Posterior cingulate gyrus (tissue), 11 donors: ENCODE measurements at regions of chr1 and their contacts with region 1.

Region 1: DNA sequence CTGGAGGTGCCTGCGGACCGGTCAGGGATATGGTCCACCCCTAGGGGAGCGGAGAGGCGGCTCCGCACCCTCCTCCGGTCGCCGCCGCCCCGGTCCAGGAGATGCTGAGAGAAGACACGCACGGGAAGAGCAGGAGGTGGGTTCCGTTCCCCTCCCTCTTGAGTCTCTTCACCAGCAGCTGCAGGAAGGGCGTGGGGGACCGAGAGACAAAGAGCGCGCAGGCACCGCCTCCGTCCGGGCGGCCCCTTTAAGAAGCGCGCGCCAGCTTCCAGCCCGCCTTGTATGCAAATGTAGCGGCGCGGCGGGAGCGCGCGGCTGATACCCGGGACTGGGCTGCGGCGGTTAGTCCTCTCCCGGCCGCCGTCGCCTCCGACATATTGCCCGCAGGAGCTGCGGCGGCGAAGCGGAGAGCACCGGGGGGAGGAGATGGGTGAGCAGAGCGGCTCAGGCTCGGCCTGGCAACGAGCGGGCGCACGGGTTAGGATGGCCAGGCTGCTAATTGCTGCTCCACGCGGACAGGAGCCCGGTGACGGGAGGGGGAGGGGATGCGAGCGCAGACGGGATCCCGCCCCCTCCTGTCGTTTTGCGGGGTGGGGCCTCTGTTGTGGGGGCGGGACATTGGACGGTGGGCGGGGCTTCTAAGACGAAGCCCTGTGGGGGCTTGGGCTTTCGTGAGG is at the start of gene TMEM39B:
- DNase-seq: peak; percentile 84 to 99 (median 96)

Region 2: DNA sequence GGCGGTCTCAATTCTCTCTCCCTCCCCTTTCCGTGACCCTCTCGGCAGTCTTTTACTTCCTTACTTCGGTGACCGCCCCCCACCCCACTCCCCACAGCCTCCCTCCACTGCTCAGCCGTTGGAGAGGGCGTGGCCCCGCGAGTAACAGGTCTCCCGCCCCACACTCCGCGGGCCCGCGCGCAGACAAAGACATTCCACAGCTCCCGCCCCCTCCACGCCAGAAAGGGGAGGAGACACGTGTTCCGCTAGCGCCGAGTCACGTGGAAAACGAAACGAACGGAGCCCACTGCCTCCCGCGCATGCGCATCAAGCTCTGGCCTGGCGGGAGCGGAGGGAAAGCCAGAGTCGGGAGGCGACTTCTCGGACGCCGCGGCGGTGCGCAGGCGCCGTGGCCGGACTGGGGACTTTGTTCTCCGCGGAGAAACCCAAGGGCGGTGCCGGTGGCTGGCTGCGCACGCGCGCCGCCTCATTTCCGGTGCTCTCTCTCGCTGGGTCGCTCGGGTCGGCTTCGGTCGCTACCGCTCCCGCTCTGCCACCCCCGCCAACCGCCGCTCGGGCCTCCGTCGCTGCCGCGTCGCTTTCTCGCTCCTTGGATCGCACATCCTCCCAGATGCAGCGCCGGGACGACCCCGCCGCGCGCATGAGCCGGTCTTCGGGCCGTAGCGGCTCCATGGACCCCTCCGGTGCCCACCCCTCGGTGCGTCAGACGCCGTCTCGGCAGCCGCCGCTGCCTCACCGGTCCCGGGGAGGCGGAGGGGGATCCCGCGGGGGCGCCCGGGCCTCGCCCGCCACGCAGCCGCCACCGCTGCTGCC is 59.2 kb before region 1 on chr1 and contains the start of gene KHDRBS1:
- intact Hi-C with region 1: loop called (anchors 2 kb)
- DNase-seq: peak; percentile 96 to 100 (median 98)

Region 3: GRCh38 chr1:32107742-32108661 is 35.2 kb after region 1 on chr1 and contains the start of gene KPNA6:
- intact Hi-C with region 1: loop called (anchors 2 kb)
- DNase-seq: peak; percentile 84 to 97 (median 90)